CD14-positive monocyte (primary cell): ENCODE measurements at regions of chr1 and their contacts with region 1.

Region 1: DNA sequence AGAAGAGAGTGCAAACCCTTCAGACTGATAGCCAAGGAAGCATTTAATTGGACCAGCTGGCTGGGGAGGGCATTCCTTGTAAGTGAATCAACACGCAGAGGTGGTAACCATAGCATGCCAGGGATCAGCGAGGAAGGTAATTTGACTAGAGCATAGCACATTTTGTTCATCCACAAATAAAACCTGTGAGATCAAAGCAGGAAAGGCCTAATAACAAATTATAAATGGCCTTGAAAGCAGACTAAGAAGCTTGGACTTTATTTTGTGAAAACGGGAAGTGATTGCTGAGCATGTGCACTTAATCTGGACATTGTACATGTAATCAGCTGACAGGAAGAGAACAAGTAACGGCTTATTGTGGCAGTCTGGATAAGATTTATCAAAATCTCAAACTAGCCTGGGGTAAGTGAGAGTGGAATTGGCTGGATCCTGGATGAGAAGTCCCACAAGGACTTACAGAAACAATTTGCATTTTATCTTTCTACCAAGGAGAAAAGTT is 11.7 kb upstream of the CD55 start:
- DNase-seq: peak; percentile 58 to 82 (median 72)
- H3K4me3 ChIP-seq: peak overlapping the region in 1 of 3 experiments; percentile 42
- H3K4me3 Mint-ChIP-seq: peak overlapping the region in 1 of 2 donors; percentile 67
- H3K27ac ChIP-seq: peak overlapping the region; percentile 45 to 81
- H3K27ac Mint-ChIP-seq: peak overlapping the region; percentile 87 to 95 (median 92)
- H3K4me1 ChIP-seq: peaks cover 53 to 61% of the 10 kb centered on the region in 2 donors
- H3K4me1 Mint-ChIP-seq: peaks cover 58% of the 10 kb centered on the region
- H3K27me3 ChIP-seq: no peaks in the 10 kb centered on the region
- H3K27me3 Mint-ChIP-seq: peaks cover 0 to 2% (median 0%) of the 10 kb centered on the region in 3 donors
- CTCF ChIP-seq: no peak

Region 2: DNA sequence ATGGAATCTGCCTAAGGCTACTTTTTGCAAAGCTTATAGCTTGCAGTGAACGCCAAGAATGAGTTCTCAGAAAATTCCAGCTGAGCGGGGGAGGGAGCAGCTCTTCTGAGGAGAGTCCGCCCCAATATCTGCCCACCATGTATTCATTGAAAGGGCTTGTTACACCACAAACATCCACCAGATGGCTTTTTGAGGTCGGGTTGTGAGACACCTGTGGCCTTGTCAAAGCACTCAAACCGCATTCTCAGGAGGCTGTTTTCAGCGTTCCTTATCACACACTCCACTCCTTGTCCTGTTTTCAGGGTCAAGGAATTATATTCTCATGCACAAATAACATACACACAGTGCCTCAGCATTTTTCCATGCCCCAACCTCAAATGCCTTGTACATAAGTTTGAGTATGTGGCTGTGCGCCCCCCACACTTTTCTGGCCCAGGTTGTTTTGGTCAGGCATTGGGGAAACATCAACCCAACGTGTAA is 225.1 kb before region 1 on chr1:
- intact Hi-C with region 1: loop called in 1 of 2 experiments (anchors 10 kb)
- DNase-seq: peak; percentile 44 to 65 (median 60)
- H3K4me3 ChIP-seq: no peak overlapping the region
- H3K4me3 Mint-ChIP-seq: no peak overlapping the region
- H3K27ac ChIP-seq: no peak overlapping the region
- H3K27ac Mint-ChIP-seq: peak overlapping the region in 2 of 7 donors; percentile 8 to 19
- H3K4me1 ChIP-seq: peaks cover 0 to 10% of the 10 kb centered on the region in 2 donors
- H3K4me1 Mint-ChIP-seq: peaks cover 16% of the 10 kb centered on the region
- H3K27me3 ChIP-seq: peaks cover 0 to 2% of the 10 kb centered on the region in 2 donors
- H3K27me3 Mint-ChIP-seq: peaks cover 3 to 6% (median 3%) of the 10 kb centered on the region in 3 donors
- CTCF ChIP-seq: peak; percentile 71

Region 3: DNA sequence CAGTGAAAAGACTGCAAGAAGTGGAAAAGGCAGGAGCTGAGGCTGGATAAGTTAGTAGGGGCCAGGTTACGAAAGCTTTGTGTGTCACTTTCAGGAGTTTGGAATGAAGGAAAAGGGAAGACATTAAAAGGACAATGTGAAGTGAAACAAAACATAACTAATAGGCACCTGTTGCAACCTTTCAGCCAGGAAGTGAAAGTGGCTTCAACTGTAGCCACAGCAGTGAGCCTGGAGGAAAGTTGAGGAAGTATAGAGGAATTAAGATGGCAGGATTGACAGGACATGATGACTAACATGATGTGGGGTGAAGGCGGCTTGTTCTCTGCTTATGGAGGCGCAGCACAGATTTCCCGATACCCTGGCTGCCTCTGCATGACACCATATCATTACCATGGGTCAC is 136.9 kb before region 1 on chr1:
- intact Hi-C with region 1: loop called in 1 of 2 experiments (anchors 10 kb)
- DNase-seq: peak; percentile 81 to 95 (median 89)
- H3K4me3 ChIP-seq: peak overlapping the region in 1 of 3 experiments; percentile 46
- H3K4me3 Mint-ChIP-seq: peak overlapping the region; percentile 21 to 68
- H3K27ac ChIP-seq: peak overlapping the region; percentile 18 to 73
- H3K27ac Mint-ChIP-seq: peak overlapping the region; percentile 91 to 97 (median 91)
- H3K4me1 ChIP-seq: peaks cover 21 to 28% of the 10 kb centered on the region in 2 donors
- H3K4me1 Mint-ChIP-seq: peaks cover 24% of the 10 kb centered on the region
- H3K27me3 ChIP-seq: no peaks in the 10 kb centered on the region
- H3K27me3 Mint-ChIP-seq: peaks cover 0 to 2% (median 0%) of the 10 kb centered on the region in 3 donors
- CTCF ChIP-seq: no peak

Region 4: DNA sequence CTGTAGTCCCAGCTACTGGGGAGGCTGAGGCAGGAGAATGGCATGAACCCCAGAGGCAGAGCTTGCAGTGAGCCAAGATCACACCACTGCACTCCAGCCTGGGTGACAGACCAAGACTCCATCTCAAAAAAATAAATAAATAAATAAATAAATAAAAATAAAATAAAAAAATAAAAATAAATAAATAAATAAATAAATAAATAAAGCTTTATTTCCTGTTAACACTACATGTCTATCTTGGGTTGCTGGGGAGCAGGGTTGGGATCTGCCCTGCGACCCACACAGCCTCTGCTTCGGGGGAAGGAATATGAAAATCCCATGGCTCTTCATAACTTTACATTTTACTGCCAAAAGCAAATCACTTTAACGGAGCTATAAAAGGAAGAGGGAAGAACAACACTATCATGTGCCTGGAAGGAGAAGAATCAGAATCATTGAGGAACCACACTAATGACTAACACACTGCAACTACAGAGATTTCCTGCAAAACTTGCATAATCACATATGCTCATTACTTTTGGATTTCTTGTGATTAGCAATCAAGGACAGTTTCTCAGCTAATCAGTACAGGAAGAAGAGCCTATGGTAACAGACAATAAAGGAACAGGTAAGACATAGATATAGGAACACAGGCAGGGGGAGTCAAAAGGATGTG is 61.2 kb before region 1 on chr1:
- intact Hi-C with region 1: loop called in 1 of 2 experiments (anchors 5 kb)
- DNase-seq: peak; percentile 81 to 96 (median 93)
- H3K4me3 ChIP-seq: peak overlapping the region in 1 of 3 experiments; percentile 51
- H3K4me3 Mint-ChIP-seq: peak overlapping the region; percentile 43 to 88
- H3K27ac ChIP-seq: peak overlapping the region; percentile 76 to 81
- H3K27ac Mint-ChIP-seq: peak overlapping the region; percentile 89 to 97 (median 93)
- H3K4me1 ChIP-seq: peaks cover 42 to 58% of the 10 kb centered on the region in 2 donors
- H3K4me1 Mint-ChIP-seq: peaks cover 53% of the 10 kb centered on the region
- H3K27me3 ChIP-seq: peaks cover 0 to 2% of the 10 kb centered on the region in 2 donors
- H3K27me3 Mint-ChIP-seq: peaks cover 2 to 8% (median 4%) of the 10 kb centered on the region in 3 donors
- CTCF ChIP-seq: no peak

Region 5: DNA sequence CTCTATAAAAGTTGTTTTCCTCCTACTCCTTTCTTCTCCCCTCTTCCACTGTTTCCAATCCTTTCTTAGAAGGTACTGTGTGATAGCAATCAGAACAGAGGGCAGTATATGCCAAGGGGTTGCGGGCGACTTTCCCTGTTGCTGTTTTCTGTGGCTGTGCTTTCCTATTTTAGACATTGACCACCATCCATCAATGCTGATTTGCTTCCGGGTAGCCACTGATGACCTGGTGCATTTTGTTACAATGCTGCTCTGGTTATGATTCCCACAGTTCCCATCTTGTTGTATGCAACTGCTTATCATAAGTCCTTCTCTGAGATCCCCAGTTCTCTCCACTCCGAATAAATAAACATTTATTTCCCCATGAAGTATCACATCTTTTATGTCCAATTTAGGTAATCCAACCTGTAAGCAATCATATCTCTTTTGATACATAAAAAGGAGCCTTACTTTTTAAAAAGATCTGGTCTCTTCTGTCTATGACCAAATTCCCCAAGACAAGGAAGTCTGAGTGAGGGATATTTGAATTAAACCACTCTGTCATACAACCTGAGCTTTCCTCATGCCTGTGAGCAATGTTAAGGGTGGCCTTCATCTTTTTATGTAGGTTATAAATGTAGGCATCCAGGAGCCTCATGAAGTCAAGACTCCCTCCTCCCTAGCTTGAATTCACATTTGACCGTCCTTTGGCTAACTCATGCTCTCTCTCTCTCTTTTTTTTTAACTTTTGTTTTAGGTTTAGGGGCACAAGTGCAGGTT is 40.9 kb before region 1 on chr1:
- intact Hi-C with region 1: no loop called
- DNase-seq: no peak
- H3K4me3 ChIP-seq: no peak overlapping the region
- H3K4me3 Mint-ChIP-seq: no peak overlapping the region
- H3K27ac ChIP-seq: no peak overlapping the region
- H3K27ac Mint-ChIP-seq: no peak overlapping the region
- H3K4me1 ChIP-seq: peaks cover 0 to 7% of the 10 kb centered on the region in 2 donors
- H3K4me1 Mint-ChIP-seq: peaks cover 9% of the 10 kb centered on the region
- H3K27me3 ChIP-seq: no peaks in the 10 kb centered on the region
- H3K27me3 Mint-ChIP-seq: peaks cover 0 to 3% (median 2%) of the 10 kb centered on the region in 3 donors
- CTCF ChIP-seq: no peak